K562 (cell line): ENCODE measurements at regions of chr6 and their contacts with region 1.

Region 1: DNA sequence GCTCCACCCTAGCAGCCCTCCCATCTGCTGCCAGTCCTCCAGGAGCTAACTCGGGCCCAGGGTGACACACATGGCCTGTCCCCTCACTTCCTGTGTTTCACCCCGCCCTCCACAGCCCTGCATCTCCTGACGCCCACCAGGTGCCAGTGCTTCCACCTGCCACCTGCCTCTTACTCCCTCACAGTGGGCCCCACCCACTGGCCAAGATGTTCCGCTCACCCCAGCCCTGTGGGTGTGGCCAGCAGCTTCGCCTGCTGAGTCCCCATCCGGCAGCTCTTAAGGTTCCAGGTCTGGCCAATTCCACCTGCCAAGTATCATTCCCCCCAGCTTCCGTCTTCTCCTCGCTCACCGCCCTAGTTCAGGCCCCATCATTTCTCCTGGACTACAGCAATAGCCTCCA is 184.1 kb downstream of the MBOAT1 start:
- DNase-seq: no peak
- ATAC-seq: peak; percentile 63
- H3K4me3 ChIP-seq: no peak overlapping the region
- H3K27ac ChIP-seq: no peak overlapping the region
- H3K4me1 ChIP-seq: peaks cover 0 to 11% of the 10 kb centered on the region in 2 experiments; a peak in 3 of 5 replicates
- H3K27me3 ChIP-seq: peaks cover 0 to 11% of the 10 kb centered on the region in 2 experiments; a peak in 2 of 5 replicates
- CTCF ChIP-seq: no peak
- EP300 ChIP-seq: no peak
- POLR2A ChIP-seq: no peak
- RAD21 ChIP-seq: no peak

Region 2: GRCh38 chr6:19719691-19720128 is 308.4 kb before region 1 on chr6:
- CTCF ChIA-PET with region 1: no interaction called
- POLR2A ChIA-PET with region 1: no interaction called
- in situ Hi-C with region 1: no loop called
- intact Hi-C with region 1: no loop called
- DNase-seq: no peak
- ATAC-seq: no peak
- H3K4me3 ChIP-seq: no peak overlapping the region
- H3K27ac ChIP-seq: no peak overlapping the region
- H3K4me1 ChIP-seq: no peaks in the 10 kb centered on the region
- H3K27me3 ChIP-seq: no peaks in the 10 kb centered on the region
- CTCF ChIP-seq: no peak
- EP300 ChIP-seq: no peak
- POLR2A ChIP-seq: no peak
- RAD21 ChIP-seq: no peak

Region 3: GRCh38 chr6:19972221-19972620 is 55.9 kb before region 1 on chr6:
- CTCF ChIA-PET with region 1: no interaction called
- POLR2A ChIA-PET with region 1: no interaction called
- in situ Hi-C with region 1: no loop called
- intact Hi-C with region 1: loop called (anchors 5 kb)
- DNase-seq: no peak
- ATAC-seq: no peak
- H3K4me3 ChIP-seq: no peak overlapping the region
- H3K27ac ChIP-seq: no peak overlapping the region
- H3K4me1 ChIP-seq: peaks cover 0 to 8% of the 10 kb centered on the region in 2 experiments; a peak in 2 of 5 replicates
- H3K27me3 ChIP-seq: peaks cover 5 to 19% of the 10 kb centered on the region in 2 experiments; a peak in 2 of 5 replicates
- CTCF ChIP-seq: no peak
- EP300 ChIP-seq: no peak
- POLR2A ChIP-seq: no peak
- RAD21 ChIP-seq: no peak